Activated CD8-positive, alpha-beta T cell treated with anti-CD3 and anti-CD28 coated beads for 36 hours (primary cell): ENCODE measurements at regions of chr11 and their contacts with region 1.

Region 1: GRCh38 chr11:32052218-32052617 is 38.7 kb upstream of the RCN1 start:
- DNase-seq: peak; percentile 61
- ATAC-seq: no peak
- H3K4me3 Mint-ChIP-seq: no peak overlapping the region
- H3K27ac Mint-ChIP-seq: no peak overlapping the region
- H3K4me1 Mint-ChIP-seq: no peaks in the 10 kb centered on the region
- H3K27me3 Mint-ChIP-seq: peaks cover 19% of the 10 kb centered on the region
- CTCF ChIP-seq: peak; percentile 63

Region 2: GRCh38 chr11:31690041-31690440 is 362.2 kb before region 1 on chr11:
- CTCF ChIA-PET with region 1: no interaction called
- POLR2A ChIA-PET with region 1: no interaction called
- intact Hi-C with region 1: no loop called
- DNase-seq: no peak
- ATAC-seq: no peak
- H3K4me3 Mint-ChIP-seq: no peak overlapping the region
- H3K27ac Mint-ChIP-seq: no peak overlapping the region
- H3K4me1 Mint-ChIP-seq: no peaks in the 10 kb centered on the region
- H3K27me3 Mint-ChIP-seq: no peaks in the 10 kb centered on the region
- CTCF ChIP-seq: no peak

Region 3: DNA sequence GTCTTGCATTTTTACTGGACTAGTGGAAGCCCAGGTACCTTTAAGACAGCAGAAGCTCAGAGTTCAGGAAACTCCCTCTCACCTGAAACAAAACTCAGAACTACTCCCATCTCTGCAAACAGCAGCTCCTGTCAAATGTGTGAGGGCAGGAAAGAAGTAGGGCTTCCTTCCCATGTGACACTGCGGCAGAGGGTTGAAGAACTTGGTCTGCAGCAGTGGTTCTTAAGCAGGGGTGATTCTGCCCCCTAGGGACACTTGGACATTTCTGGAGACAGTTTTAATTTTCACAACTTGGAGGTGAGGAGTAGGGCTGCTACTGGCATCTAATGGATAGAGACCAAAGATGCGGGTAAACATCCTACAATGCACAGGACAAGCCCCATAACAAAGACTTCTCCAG is 102.1 kb after region 1 on chr11:
- CTCF ChIA-PET with region 1: interaction called, 10 read pairs
- POLR2A ChIA-PET with region 1: no interaction called
- intact Hi-C with region 1: no loop called
- DNase-seq: no peak
- ATAC-seq: no peak
- H3K4me3 Mint-ChIP-seq: no peak overlapping the region
- H3K27ac Mint-ChIP-seq: no peak overlapping the region
- H3K4me1 Mint-ChIP-seq: no peaks in the 10 kb centered on the region
- H3K27me3 Mint-ChIP-seq: peaks cover 6% of the 10 kb centered on the region
- CTCF ChIP-seq: no peak

Region 4: GRCh38 chr11:32162351-32162750 is 110.1 kb after region 1 on chr11:
- CTCF ChIA-PET with region 1: interaction called, 24 read pairs
- POLR2A ChIA-PET with region 1: interaction called, 4 read pairs
- intact Hi-C with region 1: no loop called
- DNase-seq: no peak
- ATAC-seq: no peak
- H3K4me3 Mint-ChIP-seq: no peak overlapping the region
- H3K27ac Mint-ChIP-seq: no peak overlapping the region
- H3K4me1 Mint-ChIP-seq: no peaks in the 10 kb centered on the region
- H3K27me3 Mint-ChIP-seq: no peaks in the 10 kb centered on the region
- CTCF ChIP-seq: no peak

Region 5: DNA sequence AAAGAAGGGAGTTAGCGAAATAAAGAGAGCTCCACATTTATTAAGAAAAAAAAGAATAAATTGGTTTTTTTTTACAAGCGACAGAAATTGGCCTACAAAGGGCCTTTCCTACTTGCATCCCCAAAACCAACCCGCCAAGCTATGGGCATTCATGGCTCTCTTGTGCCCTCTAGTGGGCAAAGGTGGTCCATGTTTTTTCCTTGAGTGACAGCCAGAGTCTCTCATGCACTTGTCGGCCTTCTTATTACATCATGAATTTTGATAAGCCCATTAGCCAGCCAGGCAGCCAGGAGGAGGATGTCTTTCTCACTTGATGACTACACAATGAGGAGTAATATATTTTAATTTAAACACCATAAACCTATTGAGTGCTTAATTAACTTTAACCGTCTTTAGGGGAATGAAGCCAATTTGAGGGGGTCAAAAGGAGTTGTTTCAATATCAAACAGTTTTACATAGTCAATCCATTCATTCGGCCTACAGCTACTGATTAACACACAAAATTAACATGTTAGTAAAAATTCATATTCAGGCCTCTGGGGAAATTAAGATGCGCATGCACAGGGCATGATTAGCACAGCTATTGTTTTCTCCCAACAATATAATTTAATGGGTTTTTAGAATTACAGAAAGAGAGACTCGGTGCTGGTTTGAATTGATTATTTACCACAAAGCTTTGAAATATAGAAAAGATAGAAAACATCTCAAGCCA is 124.2 kb after region 1 on chr11:
- CTCF ChIA-PET with region 1: interaction called, 201 read pairs
- POLR2A ChIA-PET with region 1: no interaction called
- intact Hi-C with region 1: loop called (anchors 1 kb)
- DNase-seq: peak; percentile 89
- ATAC-seq: peak; percentile 90
- H3K4me3 Mint-ChIP-seq: no peak overlapping the region
- H3K27ac Mint-ChIP-seq: no peak overlapping the region
- H3K4me1 Mint-ChIP-seq: peaks cover 3% of the 10 kb centered on the region
- H3K27me3 Mint-ChIP-seq: no peaks in the 10 kb centered on the region
- CTCF ChIP-seq: peak; percentile 88

Region 6: GRCh38 chr11:32297611-32298011 is 245.4 kb after region 1 on chr11:
- CTCF ChIA-PET with region 1: interaction called, 5 read pairs
- POLR2A ChIA-PET with region 1: no interaction called
- intact Hi-C with region 1: loop called (anchors 5 kb)
- DNase-seq: no peak
- ATAC-seq: peak; percentile 51
- H3K4me3 Mint-ChIP-seq: no peak overlapping the region
- H3K27ac Mint-ChIP-seq: no peak overlapping the region
- H3K4me1 Mint-ChIP-seq: no peaks in the 10 kb centered on the region
- H3K27me3 Mint-ChIP-seq: peaks cover 2% of the 10 kb centered on the region
- CTCF ChIP-seq: peak; percentile 44